Left ventricle myocardium superior (tissue), 1 donor: ENCODE measurements at regions of chr11 and their contacts with region 1.

Region 1: GRCh38 chr11:59582006-59582405 is 33.6 kb downstream of the OSBP start:
- DNase-seq: no peak
- ATAC-seq: no peak

Region 2: DNA sequence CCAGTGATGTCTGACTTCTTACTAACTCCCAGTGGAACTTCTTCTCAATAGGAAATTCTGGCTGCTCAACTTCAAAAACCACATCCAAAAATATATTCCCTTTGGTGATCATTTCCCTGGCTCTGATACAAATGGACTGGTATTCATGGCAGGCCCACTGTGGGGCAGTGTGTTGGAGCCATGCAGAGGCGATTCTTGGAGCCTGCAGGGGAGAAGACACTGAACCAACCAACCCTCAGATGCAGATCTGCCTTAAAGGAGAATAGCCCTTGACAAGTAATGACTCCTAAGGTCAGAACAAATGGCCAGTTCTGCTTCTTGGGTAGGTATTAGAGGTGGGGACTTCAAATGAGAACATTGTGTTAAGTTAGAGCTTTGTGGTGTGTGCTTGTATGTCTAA is 58.5 kb before region 1 on chr11:
- intact Hi-C with region 1: no loop called
- DNase-seq: no peak
- ATAC-seq: no peak

Region 3: DNA sequence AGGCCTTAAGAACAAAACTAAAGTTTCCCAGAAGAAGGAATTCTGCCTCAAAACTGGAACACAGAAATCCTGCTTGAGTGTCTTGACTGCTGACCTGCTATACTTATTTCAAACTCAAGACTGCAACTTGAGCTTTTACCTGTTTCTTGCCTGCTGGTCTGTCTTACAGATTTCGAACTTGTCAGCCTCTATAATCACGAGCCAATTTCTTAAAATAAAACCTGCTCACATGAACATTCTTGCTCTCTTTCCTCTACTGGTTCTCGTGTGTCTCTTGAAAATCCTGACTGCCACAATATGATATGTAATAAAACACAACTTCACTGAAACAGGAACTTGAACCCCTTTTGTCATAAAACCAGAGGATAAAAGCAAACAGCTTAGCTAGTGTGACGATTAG is 72.9 kb after region 1 on chr11:
- intact Hi-C with region 1: loop called (anchors 5 kb)
- DNase-seq: no peak
- ATAC-seq: no peak

Region 4: DNA sequence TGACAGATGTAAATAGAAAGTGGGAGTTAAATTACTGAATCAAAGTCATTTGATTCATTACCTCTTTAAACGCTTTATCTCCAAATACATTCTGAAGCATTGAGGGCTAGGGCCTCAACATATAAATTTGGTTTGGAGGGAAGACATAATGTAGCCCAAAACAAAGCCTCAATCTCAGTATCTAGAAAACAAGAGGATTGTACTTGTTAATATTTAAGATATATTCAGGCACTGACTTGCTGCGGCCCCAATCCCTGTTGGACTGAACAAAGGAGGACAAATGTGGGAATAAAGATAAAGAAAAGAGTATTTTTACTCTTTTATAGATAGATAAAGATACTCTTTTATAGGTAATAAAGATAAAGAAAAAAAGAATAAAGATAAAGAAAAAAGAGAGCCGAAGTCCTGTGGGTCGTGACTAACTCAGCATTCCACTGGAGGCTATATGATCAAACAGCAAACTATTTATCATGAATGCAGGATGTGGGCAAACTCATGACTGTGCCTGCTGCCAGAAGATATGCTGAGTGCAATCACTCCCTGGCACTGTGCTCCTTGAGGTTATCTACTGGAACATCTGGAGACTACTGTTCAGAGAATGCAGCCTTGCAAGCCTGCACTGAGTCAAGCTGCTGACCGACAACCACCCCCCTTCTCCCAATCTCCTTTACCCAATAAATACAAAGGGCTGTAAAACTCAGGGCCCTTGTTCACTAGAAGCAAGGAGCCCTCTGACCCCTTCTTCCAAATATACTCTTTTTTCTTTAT is 124.7 kb after region 1 on chr11:
- intact Hi-C with region 1: no loop called
- DNase-seq: no peak
- ATAC-seq: no peak

Region 5: GRCh38 chr11:60005360-60005759 is 423.4 kb after region 1 on chr11:
- intact Hi-C with region 1: no loop called
- DNase-seq: no peak
- ATAC-seq: no peak